ENCODE measurements at regions of chr18 and their contacts with region 1.

Region 1: DNA sequence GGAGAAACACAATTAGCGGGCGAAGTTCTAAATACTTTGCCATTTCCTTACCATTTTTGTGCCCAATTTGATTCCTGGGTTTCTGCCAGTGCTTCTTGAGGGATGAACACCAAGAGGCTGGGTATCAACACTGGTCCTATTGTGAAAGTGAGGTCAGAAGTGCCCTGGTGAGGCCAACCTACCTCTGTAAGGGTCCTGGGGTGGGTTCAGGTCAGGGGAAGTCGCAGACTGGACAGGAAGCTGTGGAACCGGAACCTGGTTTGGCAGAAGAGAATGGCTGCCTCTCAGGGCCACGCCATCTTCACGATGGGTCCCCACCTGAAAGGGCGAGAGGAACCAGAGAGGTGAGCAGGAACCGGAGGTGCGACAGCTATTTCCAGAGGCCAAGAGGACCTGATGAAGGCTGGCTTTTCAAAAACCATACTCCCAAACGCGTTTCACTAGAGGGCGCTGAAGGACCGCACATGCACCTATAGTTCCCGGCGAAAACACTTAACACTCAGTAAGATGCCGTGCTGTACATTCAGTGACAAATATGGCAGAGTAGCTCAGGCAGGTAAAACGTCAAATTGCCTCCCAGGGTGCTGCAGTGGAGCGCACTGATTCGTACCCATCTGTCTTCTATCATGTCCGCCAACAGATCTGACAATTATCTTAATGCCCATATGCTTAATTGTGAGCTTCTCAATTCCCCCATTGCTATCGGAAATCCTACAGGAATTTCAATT is 275.3 kb upstream of the CCDC68 start:
- DNase-seq: peak; percentile 53
- ATAC-seq: peak; percentile 87
- H3K4me3 ChIP-seq: no peak overlapping the region
- H3K27ac ChIP-seq: no peak overlapping the region
- H3K4me1 ChIP-seq: peaks cover 19% of the 10 kb centered on the region
- H3K27me3 ChIP-seq: no peaks in the 10 kb centered on the region
- CTCF ChIP-seq: peak; percentile 81 to 95 (median 86)
- EP300 ChIP-seq: no peak
- POLR2A ChIP-seq: no peak
- RAD21 ChIP-seq: peak; percentile 99

Region 2: DNA sequence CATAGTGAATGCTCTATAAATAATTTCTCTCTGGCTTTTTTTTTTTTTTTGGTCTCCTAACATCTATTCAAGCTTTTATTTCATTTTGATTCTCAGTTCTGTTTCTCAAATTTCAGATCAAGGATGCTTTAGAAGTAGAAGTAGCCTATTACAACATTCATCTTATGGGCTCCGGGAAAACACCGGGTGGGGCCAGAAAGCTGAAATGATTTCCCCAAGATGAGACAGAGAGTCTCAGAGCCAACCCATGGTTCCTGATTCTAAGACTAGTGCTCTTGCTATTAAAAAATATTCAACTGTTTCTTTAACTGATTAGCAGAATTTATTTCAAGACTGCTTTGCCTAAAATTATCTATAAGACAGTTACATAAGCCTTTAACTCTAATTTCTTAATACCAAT is 128.1 kb before region 1 on chr18:
- CTCF ChIA-PET with region 1: no interaction called
- POLR2A ChIA-PET with region 1: no interaction called
- RAD21 ChIA-PET with region 1: no interaction called
- SMC1A ChIA-PET with region 1: no interaction called
- in situ Hi-C with region 1: no loop called
- intact Hi-C with region 1: no loop called
- DNase-seq: no peak
- ATAC-seq: no peak
- H3K4me3 ChIP-seq: no peak overlapping the region
- H3K27ac ChIP-seq: no peak overlapping the region
- H3K4me1 ChIP-seq: no peaks in the 10 kb centered on the region
- H3K27me3 ChIP-seq: no peaks in the 10 kb centered on the region
- CTCF ChIP-seq: no peak
- EP300 ChIP-seq: no peak
- POLR2A ChIP-seq: no peak
- RAD21 ChIP-seq: no peak

Region 3: DNA sequence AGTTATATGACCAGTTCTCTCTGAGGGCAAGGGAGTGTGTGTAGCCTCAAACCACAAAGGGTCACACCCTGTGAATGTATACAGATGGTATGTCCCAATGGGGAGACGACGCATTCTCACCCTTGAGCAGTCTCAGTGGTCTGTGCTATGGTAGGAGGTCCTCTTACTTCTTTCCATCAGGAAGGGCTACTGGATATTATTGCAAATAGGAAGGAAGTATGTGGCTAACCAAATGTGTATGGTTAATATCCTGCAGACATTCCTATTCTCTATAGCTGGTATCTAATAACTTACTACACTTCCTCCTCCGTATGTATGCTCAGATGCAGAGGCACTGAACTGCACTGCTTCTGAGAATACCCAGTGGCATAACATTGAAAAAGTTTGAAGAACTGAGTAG is 31.5 kb after region 1 on chr18:
- CTCF ChIA-PET with region 1: interaction called, 75 read pairs
- POLR2A ChIA-PET with region 1: interaction called, 11 read pairs
- RAD21 ChIA-PET with region 1: interaction called, 60 read pairs
- SMC1A ChIA-PET with region 1: interaction called, 55 read pairs
- in situ Hi-C with region 1: no loop called
- intact Hi-C with region 1: no loop called
- DNase-seq: peak; percentile 59
- ATAC-seq: peak; percentile 68
- H3K4me3 ChIP-seq: no peak overlapping the region
- H3K27ac ChIP-seq: peak overlapping the region; percentile 93
- H3K4me1 ChIP-seq: peaks cover 61% of the 10 kb centered on the region
- H3K27me3 ChIP-seq: no peaks in the 10 kb centered on the region
- CTCF ChIP-seq: no peak
- EP300 ChIP-seq: no peak
- POLR2A ChIP-seq: no peak
- RAD21 ChIP-seq: no peak

Region 4: DNA sequence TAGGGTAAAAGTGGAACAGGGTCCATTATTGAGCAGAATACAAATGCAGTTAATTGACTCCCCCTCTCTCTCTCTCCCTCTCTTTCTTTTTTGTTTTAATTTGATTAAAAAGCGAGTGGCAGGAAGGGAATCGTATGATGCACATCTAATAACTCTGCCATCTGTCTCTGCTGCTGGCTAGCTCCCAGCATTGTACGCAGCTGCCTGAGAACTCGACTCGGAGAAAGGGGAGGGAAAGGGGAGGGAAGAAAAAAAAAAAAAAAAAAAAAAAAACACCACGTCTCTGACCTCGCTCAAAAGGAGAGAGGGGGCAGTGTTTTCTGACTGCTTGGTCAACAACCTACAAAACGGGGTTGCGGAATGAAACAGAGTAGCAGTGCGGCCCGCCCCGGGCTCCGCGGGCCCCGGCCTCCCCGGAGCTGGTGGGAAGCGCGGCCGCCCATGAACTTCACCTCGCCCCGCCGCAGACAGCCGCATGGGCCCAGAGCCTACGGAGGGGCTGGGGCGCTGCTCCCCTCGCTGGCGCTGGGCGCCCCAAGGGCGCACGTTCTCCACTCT is 87.7 kb after region 1 on chr18:
- CTCF ChIA-PET with region 1: interaction called, 22 read pairs
- POLR2A ChIA-PET with region 1: interaction called, 3 read pairs
- RAD21 ChIA-PET with region 1: interaction called, 21 read pairs
- SMC1A ChIA-PET with region 1: interaction called, 26 read pairs
- in situ Hi-C with region 1: no loop called
- intact Hi-C with region 1: loop called (anchors 1 kb)
- DNase-seq: peak; percentile 74
- ATAC-seq: peak; percentile 66
- H3K4me3 ChIP-seq: peak overlapping the region; percentile 91
- H3K27ac ChIP-seq: peak overlapping the region; percentile 84
- H3K4me1 ChIP-seq: no peaks in the 10 kb centered on the region
- H3K27me3 ChIP-seq: no peaks in the 10 kb centered on the region
- CTCF ChIP-seq: no peak
- EP300 ChIP-seq: 0 out of 4 replicates have a peak, but pooled peaks of 1 of the 2 experiments have one; percentile 13
- POLR2A ChIP-seq: peak; percentile 80
- RAD21 ChIP-seq: no peak

Region 5: DNA sequence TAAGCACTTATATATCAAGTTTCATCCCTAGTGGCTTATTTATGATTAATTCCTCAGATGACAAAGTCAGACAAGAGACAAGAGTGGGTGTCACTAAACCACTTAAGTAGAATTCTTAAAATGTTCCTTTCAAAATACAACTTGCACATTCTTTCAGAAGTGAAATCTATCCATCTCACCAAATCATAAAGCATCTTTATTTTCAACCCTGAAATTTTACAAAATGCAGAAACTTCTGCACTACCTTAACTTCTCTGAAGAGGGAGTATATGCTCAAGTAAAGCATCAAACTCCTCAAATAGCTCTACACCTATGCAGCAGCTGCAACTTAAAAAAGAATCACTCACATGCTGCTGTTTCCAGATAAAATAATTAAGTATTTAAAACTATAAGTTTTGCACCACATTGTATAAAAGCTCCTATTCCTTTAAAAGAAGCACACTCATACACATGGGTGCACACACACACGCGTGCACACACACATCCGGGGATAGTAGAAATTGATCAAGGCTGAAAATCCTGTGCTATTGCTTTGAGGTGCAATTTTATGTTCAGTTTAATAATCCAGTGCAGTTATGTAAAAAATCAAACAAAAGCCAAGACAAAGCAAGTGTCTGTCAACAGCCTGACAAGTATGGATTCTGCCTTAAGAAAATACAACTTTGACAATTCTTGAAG is 109.0 kb after region 1 on chr18:
- CTCF ChIA-PET with region 1: interaction called, 54 read pairs
- POLR2A ChIA-PET with region 1: interaction called, 6 read pairs
- RAD21 ChIA-PET with region 1: interaction called, 25 read pairs
- SMC1A ChIA-PET with region 1: interaction called, 36 read pairs
- in situ Hi-C with region 1: no loop called
- intact Hi-C with region 1: no loop called
- DNase-seq: no peak
- ATAC-seq: peak; percentile 82
- H3K4me3 ChIP-seq: no peak overlapping the region
- H3K27ac ChIP-seq: no peak overlapping the region
- H3K4me1 ChIP-seq: no peaks in the 10 kb centered on the region
- H3K27me3 ChIP-seq: peaks cover 0 to 3% of the 10 kb centered on the region in 2 experiments; a peak in 1 of 4 replicates
- CTCF ChIP-seq: peak; percentile 58 to 65 (median 58); a peak in 5 of 6 replicates
- EP300 ChIP-seq: no peak
- POLR2A ChIP-seq: no peak
- RAD21 ChIP-seq: peak; percentile 68

Region 6: GRCh38 chr18:55405893-55406406 is 171.4 kb after region 1 on chr18:
- CTCF ChIA-PET with region 1: interaction called, 10 read pairs
- POLR2A ChIA-PET with region 1: no interaction called
- RAD21 ChIA-PET with region 1: interaction called, 4 read pairs
- SMC1A ChIA-PET with region 1: interaction called, 4 read pairs
- in situ Hi-C with region 1: loop called (anchors 10 kb)
- intact Hi-C with region 1: no loop called
- DNase-seq: no peak
- ATAC-seq: peak; percentile 59
- H3K4me3 ChIP-seq: no peak overlapping the region
- H3K27ac ChIP-seq: no peak overlapping the region
- H3K4me1 ChIP-seq: no peaks in the 10 kb centered on the region
- H3K27me3 ChIP-seq: no peaks in the 10 kb centered on the region; a peak in 1 of 4 replicates
- CTCF ChIP-seq: no peak
- EP300 ChIP-seq: no peak
- POLR2A ChIP-seq: no peak
- RAD21 ChIP-seq: no peak

Region 7: DNA sequence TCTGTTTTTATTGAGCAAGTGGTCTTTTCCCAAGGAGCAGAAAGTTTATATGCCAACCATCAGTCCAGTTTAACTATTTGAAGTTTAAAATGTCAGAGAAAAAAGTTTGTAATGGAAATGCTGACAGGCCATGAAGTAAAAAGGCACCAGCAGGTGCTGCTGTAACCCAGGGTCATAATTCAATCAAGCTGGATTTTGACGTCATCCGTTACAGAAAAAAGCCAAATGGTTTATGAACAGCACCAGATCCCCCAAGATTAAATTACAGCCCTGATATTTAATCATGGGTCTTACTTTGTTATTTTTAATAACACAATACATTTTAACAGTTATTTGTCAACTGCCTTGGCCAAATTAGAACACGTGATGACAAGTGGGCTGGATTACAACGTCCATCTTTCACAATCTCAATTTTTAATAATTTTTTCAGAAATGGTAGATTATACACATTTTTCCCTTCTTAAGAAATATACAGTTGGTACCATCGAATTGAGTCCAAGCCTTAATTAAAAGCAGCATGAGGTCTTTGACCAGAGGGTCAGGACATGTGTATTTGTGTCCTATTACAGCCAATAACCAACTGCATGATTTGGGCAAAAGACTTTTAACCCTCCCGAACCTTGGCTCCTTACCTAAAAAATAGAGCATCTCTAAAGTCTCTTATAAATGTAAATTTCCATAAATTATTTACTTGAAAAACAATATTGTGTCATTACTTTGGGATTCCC is 343.4 kb after region 1 on chr18:
- CTCF ChIA-PET with region 1: no interaction called
- POLR2A ChIA-PET with region 1: no interaction called
- RAD21 ChIA-PET with region 1: no interaction called
- SMC1A ChIA-PET with region 1: no interaction called
- in situ Hi-C with region 1: no loop called
- intact Hi-C with region 1: loop called (anchors 10 kb)
- DNase-seq: no peak
- ATAC-seq: no peak
- H3K4me3 ChIP-seq: no peak overlapping the region
- H3K27ac ChIP-seq: no peak overlapping the region
- H3K4me1 ChIP-seq: no peaks in the 10 kb centered on the region
- H3K27me3 ChIP-seq: no peaks in the 10 kb centered on the region
- CTCF ChIP-seq: 0 out of 6 replicates have a peak, but pooled peaks of 1 of the 3 experiments have one; percentile 3
- EP300 ChIP-seq: no peak
- POLR2A ChIP-seq: no peak
- RAD21 ChIP-seq: peak; percentile 21; the same call in 1 of the 2 replicates

Region 8: GRCh38 chr18:55664781-55665271 is 430.3 kb after region 1 on chr18:
- CTCF ChIA-PET with region 1: no interaction called
- POLR2A ChIA-PET with region 1: no interaction called
- RAD21 ChIA-PET with region 1: no interaction called
- SMC1A ChIA-PET with region 1: no interaction called
- in situ Hi-C with region 1: no loop called
- intact Hi-C with region 1: no loop called
- DNase-seq: no peak
- ATAC-seq: no peak
- H3K4me3 ChIP-seq: no peak overlapping the region
- H3K27ac ChIP-seq: no peak overlapping the region
- H3K4me1 ChIP-seq: no peaks in the 10 kb centered on the region
- H3K27me3 ChIP-seq: no peaks in the 10 kb centered on the region
- CTCF ChIP-seq: no peak
- EP300 ChIP-seq: no peak
- POLR2A ChIP-seq: no peak
- RAD21 ChIP-seq: no peak

Measured in GM12878 (cell line).